CD8-positive, alpha-beta T cell (primary cell): ENCODE measurements at regions of chr12 and their contacts with region 1.

Region 1: GRCh38 chr12:91991399-91992187 is 154.1 kb downstream of the BTG1 start:
- DNase-seq: peak in 2 of 9 experiments; percentile 61 to 77
- ATAC-seq: peak; percentile 71
- H3K4me3 ChIP-seq: no peak overlapping the region
- H3K4me3 Mint-ChIP-seq: no peak overlapping the region
- H3K27ac ChIP-seq: no peak overlapping the region
- H3K27ac Mint-ChIP-seq: peak overlapping the region; percentile 66
- H3K4me1 ChIP-seq: peaks cover 25% of the 10 kb centered on the region
- H3K4me1 Mint-ChIP-seq: peaks cover 65% of the 10 kb centered on the region
- H3K27me3 ChIP-seq: no peaks in the 10 kb centered on the region
- H3K27me3 Mint-ChIP-seq: no peaks in the 10 kb centered on the region
- CTCF ChIP-seq: peak; percentile 28

Region 2: DNA sequence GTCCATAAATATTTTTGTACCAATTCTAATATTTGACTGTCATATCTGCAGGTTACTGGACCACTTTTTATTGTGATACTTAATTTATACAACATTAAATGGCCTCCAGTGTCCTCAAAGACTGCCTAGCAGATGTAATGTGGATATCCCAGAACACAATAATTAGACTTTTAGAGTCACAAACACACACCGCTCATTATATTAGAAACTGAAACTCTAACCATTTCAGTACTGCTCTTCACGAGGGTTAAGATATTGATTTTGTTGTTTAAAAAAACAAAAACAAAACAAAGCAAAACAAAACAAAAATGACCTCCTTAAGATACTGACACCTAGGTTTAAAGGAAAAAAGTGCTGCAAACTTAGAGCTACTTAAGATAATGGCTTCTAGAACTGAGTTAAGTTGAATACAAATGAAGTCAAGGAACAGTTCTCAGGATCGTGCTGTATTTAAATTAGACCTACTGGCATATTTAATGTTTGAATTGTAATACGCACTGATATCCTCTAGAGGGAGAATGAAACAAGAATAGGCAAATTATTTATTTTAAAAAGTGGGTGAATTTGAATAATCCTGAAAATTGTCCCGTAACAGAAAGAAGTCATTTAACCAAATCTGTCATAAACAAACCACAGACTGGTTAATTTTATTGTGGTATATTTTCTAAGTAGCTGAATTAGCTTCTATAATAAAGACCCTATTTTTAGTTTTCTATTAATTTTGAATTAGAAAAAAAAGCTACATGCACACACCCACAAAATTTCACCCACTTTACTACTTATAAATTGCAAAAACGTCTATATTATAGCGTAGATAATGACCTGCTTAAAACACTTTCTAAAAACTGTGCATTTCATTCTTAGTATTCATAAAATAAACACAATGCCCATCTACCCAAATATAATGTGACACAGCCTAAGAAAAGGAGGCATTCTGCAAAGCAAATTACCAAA is 413.7 kb before region 1 on chr12:
- CTCF ChIA-PET with region 1: no interaction called
- POLR2A ChIA-PET with region 1: no interaction called
- intact Hi-C with region 1: loop called in 1 of 2 experiments (anchors 5 kb)
- DNase-seq: peak in 2 of 9 experiments; percentile 37 to 59
- ATAC-seq: peak; percentile 85
- H3K4me3 ChIP-seq: peak overlapping the region; percentile 34 to 39
- H3K4me3 Mint-ChIP-seq: peak overlapping the region; percentile 77
- H3K27ac ChIP-seq: no peak overlapping the region
- H3K27ac Mint-ChIP-seq: peak overlapping the region; percentile 50
- H3K4me1 ChIP-seq: no peaks in the 10 kb centered on the region
- H3K4me1 Mint-ChIP-seq: peaks cover 14% of the 10 kb centered on the region
- H3K27me3 ChIP-seq: no peaks in the 10 kb centered on the region
- H3K27me3 Mint-ChIP-seq: no peaks in the 10 kb centered on the region
- CTCF ChIP-seq: peak; percentile 87

Region 3: DNA sequence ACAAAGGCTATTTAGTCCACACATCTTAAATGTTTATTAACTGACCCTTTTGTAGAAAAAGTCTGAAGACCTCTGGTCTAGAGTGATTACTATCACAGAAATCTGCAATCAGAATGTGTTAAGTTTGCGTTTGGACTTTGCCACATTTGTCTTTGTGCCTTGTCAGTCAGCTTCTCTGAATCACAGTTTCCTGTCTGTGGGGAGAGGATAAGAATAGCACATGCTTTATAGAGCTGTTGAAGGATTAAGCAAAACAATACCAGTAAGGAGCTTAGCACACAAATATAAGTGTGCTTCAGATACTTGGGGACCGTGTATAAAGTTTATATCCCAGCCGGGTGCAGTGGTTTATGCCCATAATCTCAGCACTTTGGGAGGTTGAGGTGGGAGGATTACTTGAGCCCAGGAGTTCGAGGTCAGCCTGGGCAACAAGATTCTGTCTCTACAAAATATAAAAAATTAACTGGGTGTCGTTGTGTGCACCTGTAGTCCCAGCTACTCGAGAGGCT is 217.1 kb after region 1 on chr12:
- CTCF ChIA-PET with region 1: no interaction called
- POLR2A ChIA-PET with region 1: no interaction called
- intact Hi-C with region 1: loop called in 1 of 2 experiments (anchors 5 kb)
- DNase-seq: peak in 7 of 9 experiments; percentile 25 to 74 (median 32)
- ATAC-seq: peak; percentile 83
- H3K4me3 ChIP-seq: peak overlapping the region; percentile 28 to 32
- H3K4me3 Mint-ChIP-seq: peak overlapping the region; percentile 67
- H3K27ac ChIP-seq: peak overlapping the region; percentile 26 to 34
- H3K27ac Mint-ChIP-seq: peak overlapping the region; percentile 92
- H3K4me1 ChIP-seq: peaks cover 27% of the 10 kb centered on the region
- H3K4me1 Mint-ChIP-seq: peaks cover 40% of the 10 kb centered on the region
- H3K27me3 ChIP-seq: no peaks in the 10 kb centered on the region
- H3K27me3 Mint-ChIP-seq: no peaks in the 10 kb centered on the region
- CTCF ChIP-seq: no peak